GM12878 (cell line): ENCODE measurements at regions of chr11 and their contacts with region 1.

Region 1: DNA sequence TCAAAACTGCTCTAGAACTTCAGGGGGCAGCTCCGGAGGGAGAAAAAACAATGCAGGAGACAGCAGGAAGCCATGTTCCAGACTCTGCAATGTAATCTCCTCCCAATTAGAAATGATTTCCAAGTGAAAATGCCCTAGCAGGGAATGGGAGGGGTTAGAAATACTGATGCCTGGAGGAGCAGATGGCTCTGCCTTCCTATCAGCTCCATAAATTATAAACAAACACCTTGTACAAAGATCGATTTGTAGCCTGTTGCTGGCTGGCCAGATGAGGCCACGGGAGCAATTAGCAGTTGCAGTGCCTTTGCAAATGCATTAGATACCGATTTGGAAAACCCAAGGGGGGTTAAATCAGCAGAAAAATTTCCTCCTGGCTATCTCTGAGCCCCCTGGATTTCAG is 46.6 kb upstream of the CHRM4 start:
- DNase-seq: no peak
- ATAC-seq: no peak
- H3K4me3 ChIP-seq: no peak overlapping the region
- H3K27ac ChIP-seq: no peak overlapping the region
- H3K4me1 ChIP-seq: peaks cover 4% of the 10 kb centered on the region; the same call in 1 of the 2 replicates
- H3K27me3 ChIP-seq: no peaks in the 10 kb centered on the region
- CTCF ChIP-seq: no peak
- EP300 ChIP-seq: no peak
- POLR2A ChIP-seq: no peak
- RAD21 ChIP-seq: no peak

Region 2: GRCh38 chr11:46475926-46476545 is 37.8 kb after region 1 on chr11:
- CTCF ChIA-PET with region 1: interaction called, 8 read pairs
- POLR2A ChIA-PET with region 1: interaction called, 6 read pairs
- RAD21 ChIA-PET with region 1: interaction called, 31 read pairs
- SMC1A ChIA-PET with region 1: interaction called, 105 read pairs
- in situ Hi-C with region 1: no loop called
- intact Hi-C with region 1: no loop called
- DNase-seq: peak; percentile 28
- ATAC-seq: peak; percentile 73
- H3K4me3 ChIP-seq: no peak overlapping the region
- H3K27ac ChIP-seq: no peak overlapping the region
- H3K4me1 ChIP-seq: peaks cover 15% of the 10 kb centered on the region
- H3K27me3 ChIP-seq: no peaks in the 10 kb centered on the region
- CTCF ChIP-seq: no peak
- EP300 ChIP-seq: no peak
- POLR2A ChIP-seq: no peak
- RAD21 ChIP-seq: no peak

Region 3: GRCh38 chr11:46484101-46484500 is 45.9 kb after region 1 on chr11:
- CTCF ChIA-PET with region 1: interaction called, 17 read pairs
- POLR2A ChIA-PET with region 1: interaction called, 19 read pairs
- RAD21 ChIA-PET with region 1: interaction called, 31 read pairs
- SMC1A ChIA-PET with region 1: interaction called, 105 read pairs
- in situ Hi-C with region 1: no loop called
- intact Hi-C with region 1: no loop called
- DNase-seq: no peak
- ATAC-seq: no peak
- H3K4me3 ChIP-seq: no peak overlapping the region
- H3K27ac ChIP-seq: peak overlapping the region; percentile 41
- H3K4me1 ChIP-seq: peaks cover 3% of the 10 kb centered on the region
- H3K27me3 ChIP-seq: no peaks in the 10 kb centered on the region
- CTCF ChIP-seq: no peak
- EP300 ChIP-seq: no peak
- POLR2A ChIP-seq: no peak
- RAD21 ChIP-seq: no peak

Region 4: DNA sequence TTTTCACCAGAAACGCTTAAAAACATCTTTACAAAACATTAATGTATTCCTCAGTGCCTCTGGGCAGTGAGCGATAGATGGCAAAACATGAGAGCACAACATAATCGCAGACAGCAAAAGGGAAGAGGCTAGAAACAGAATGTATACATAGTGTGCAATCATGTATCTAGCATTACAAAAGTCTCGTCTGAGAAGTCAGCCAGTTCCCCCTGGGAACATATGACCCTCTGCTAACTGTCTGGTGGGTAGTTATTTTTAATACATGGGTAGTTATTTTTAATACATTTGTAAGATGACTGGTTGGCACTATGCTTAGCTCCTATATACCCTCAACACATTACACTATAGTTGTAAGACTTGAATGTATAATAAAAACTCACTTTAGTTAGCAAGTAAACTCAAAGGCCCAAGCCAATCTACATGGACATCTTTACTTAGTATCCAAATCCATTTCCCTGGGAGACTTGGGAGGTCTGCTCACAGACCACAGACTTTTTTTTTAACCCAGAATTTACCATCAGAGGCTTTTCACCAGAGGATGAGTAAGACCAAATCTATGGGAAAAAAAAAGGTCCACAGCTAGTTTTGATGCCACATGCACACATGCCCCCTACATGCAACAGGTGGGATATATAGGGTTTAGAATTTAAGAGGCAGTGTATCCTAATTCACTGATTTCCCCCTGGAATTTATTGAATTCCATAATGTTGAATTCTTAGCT is 83.9 kb after region 1 on chr11:
- CTCF ChIA-PET with region 1: interaction called, 4 read pairs
- POLR2A ChIA-PET with region 1: interaction called, 3 read pairs
- RAD21 ChIA-PET with region 1: interaction called, 14 read pairs
- SMC1A ChIA-PET with region 1: interaction called, 10 read pairs
- in situ Hi-C with region 1: no loop called
- intact Hi-C with region 1: no loop called
- DNase-seq: no peak
- ATAC-seq: peak; percentile 77
- H3K4me3 ChIP-seq: no peak overlapping the region
- H3K27ac ChIP-seq: peak overlapping the region; percentile 50
- H3K4me1 ChIP-seq: peaks cover 14% of the 10 kb centered on the region
- H3K27me3 ChIP-seq: no peaks in the 10 kb centered on the region
- CTCF ChIP-seq: peak; percentile 26 to 46 (median 29); a peak in 4 of 6 replicates
- EP300 ChIP-seq: no peak
- POLR2A ChIP-seq: no peak
- RAD21 ChIP-seq: peak; percentile 58